Heart left ventricle (tissue), 16 donors: ENCODE measurements at regions of chr9 and their contacts with region 1.

Region 1: DNA sequence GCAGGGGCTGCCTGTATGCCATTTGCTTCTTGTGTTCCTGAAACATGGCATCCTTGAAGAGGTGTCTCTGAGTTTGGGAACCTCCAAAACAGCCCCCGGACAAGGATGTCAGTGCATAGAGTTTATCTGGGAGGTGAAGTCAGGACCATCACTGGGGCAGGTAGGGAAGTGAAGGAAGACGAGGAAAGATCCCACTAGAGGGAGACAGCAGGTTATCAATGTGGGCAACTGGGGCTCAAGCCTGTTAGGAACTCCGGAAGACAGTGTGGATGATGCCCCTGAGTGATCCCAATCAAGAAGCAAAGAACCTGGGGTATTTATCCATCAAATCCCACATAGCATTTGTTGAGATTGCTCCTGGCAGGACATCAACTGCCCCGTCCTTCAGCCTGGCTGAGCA is 233.1 kb downstream of the AGTPBP1 start:
- DNase-seq: no peak
- ATAC-seq: no peak
- H3K4me3 ChIP-seq: no peak overlapping the region
- H3K27ac ChIP-seq: no peak overlapping the region
- H3K4me1 ChIP-seq: no peaks in the 10 kb centered on the region
- H3K27me3 ChIP-seq: no peaks in the 10 kb centered on the region
- CTCF ChIP-seq: peak in 3 of 12 donors; percentile 7 to 24 (median 11)
- POLR2A ChIP-seq: no peak

Region 2: DNA sequence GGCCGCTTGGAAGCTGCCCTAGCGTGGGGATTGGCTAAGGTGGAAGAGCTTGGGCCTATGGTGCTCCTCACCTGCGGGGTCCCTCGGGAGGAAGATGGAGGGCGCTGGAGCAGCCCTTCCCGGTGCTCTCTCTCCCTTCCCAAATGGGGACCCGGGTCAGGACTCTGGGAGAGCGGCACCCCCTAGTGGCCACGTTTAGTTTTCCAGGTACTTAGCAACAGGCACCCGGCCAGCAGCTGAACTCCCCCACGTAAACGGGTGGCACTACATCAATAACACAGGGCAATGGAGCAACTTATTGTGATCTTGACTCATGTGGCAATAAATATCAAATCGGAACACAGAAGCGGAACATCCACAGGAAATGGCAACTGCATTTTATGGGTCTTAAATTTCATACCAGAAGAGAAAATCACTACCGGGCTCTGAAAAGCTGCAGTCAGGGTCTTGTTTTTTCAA is 83.4 kb before region 1 on chr9:
- intact Hi-C with region 1: no loop called
- DNase-seq: peak in 4 of 5 donors; percentile 34 to 54 (median 42)
- ATAC-seq: peak in 2 of 4 donors; percentile 42 to 51
- H3K4me3 ChIP-seq: no peak overlapping the region
- H3K27ac ChIP-seq: no peak overlapping the region
- H3K4me1 ChIP-seq: peaks cover 0 to 3% (median 0%) of the 10 kb centered on the region in 12 donors
- H3K27me3 ChIP-seq: peaks cover 0 to 10% (median 0%) of the 10 kb centered on the region in 9 donors
- CTCF ChIP-seq: peak; percentile 33 to 70 (median 54)
- POLR2A ChIP-seq: no peak

Region 3: GRCh38 chr9:85610074-85610860 is 101.7 kb after region 1 on chr9:
- intact Hi-C with region 1: loop called in 3 of 10 experiments (anchors 1 to 10 kb)
- DNase-seq: no peak
- ATAC-seq: peak in 3 of 4 donors; percentile 64 to 78 (median 73)
- H3K4me3 ChIP-seq: peak overlapping the region in 7 of 12 donors; percentile 5 to 46 (median 31)
- H3K27ac ChIP-seq: peak overlapping the region in 1 of 12 donors; percentile 18
- H3K4me1 ChIP-seq: peaks cover 0 to 7% (median 0%) of the 10 kb centered on the region in 12 donors
- H3K27me3 ChIP-seq: no peaks in the 10 kb centered on the region
- CTCF ChIP-seq: peak; percentile 69 to 90 (median 76)
- POLR2A ChIP-seq: no peak